ENCODE measurements at regions of chr10 and their contacts with region 1.

Region 1: DNA sequence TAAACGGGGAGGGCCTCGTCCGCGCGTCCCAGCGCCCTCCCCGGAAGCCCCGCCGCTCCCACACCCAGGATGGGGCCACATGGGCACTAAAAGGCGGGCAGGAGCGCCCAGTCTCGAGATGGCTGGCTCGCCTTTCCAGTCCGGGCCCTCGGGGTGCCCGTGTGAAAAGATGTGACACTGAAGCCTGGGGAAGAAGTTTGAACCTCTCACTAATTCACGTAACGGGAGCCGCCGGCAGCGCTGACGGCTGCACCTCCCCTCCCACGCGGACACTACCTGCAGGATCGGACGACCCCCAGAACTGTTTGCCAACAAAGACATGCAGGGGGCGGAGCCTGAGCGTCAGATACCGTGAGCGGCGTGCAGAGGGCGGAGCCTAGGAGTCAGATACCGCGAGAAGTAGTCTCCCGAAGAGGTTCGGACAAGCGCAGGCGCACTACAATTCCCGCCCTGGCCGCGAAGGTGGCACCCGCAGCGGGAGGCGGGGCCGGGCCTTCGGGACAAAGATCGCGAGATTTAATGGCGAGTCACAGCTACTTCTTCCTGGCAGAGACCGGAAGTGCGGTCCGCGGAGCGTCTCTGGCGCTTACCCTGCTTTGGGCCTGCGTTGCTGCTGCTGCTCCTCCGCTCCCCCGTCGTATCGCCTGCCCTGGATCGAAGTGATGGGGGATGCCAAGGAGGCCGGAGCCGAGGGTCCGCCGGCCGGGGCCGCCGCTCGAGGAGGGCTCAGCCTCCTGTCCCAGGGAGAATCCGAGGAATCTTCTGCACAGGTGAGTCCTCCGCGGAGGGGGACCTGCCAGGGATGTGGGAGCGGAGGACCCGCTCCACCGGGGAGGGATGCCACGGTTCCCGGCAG is at the start of gene EDRF1:
- DNase-seq: peak; percentile 99
- H3K4me3 Mint-ChIP-seq: peak within 1 kb of the TSS; percentile 97
- H3K27ac Mint-ChIP-seq: peak within 1 kb of the TSS; percentile 97
- H3K4me1 Mint-ChIP-seq: peaks cover 30% of the 10 kb centered on the region
- H3K27me3 Mint-ChIP-seq: no peaks in the 10 kb centered on the region
- total RNA-seq, gene EDRF1: 23.0 to 27.7 TPM

Region 2: DNA sequence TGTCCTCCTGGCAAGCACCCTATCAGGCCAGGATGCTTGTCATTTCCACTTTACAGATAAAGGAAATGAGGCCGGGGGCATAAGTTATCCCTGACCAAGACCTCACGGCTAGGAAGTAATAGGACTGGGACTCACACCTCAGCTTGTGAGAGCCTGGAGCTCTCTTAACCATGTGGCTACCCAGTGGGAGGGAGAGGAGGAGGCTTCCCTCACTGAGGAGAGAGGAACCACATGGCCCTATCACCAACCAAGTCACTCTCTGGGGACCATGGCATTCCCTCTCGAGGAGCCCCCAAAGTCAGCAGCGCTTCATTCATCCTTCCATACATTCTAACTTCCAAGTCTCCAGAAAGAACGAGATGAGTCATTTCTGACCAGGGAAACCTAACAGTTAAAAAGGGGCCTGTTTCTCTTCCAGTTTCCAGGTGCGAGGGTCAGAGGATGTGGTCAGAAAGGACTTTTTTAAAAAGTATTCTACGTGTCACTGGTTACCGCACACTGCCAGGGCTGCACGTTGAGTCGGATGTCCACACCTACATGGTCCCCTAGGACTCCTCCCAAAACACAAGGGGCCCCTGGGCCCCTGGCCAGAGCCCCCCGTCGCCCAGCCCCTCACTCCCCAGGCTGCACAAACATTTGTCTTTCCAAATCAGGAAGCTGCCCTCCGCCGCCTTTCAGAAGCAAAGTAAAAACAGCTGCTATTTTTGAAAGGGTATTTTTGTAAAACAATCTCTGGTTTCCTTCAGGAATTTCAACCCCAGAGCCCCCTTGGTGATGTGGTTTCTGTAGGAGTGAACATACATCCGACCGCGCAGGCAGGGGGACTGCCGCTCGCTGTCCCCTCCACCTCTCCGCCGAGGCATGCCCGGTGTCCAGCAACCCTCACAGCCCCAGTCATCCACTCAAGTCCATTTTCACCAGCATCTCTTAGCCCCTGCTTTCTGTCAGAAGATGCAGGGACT is 1497.7 kb before region 1 on chr10:
- CTCF ChIA-PET with region 1: no interaction called
- POLR2A ChIA-PET with region 1: no interaction called
- intact Hi-C with region 1: loop called (anchors 5 kb)
- DNase-seq: no peak
- H3K4me3 Mint-ChIP-seq: no peak overlapping the region
- H3K27ac Mint-ChIP-seq: no peak overlapping the region
- H3K4me1 Mint-ChIP-seq: no peaks in the 10 kb centered on the region
- H3K27me3 Mint-ChIP-seq: peaks cover 9% of the 10 kb centered on the region

Region 3: GRCh38 chr10:125822878-125823662 is 103.7 kb after region 1 on chr10 and contains the starts of genes BCCIP and UROS:
- CTCF ChIA-PET with region 1: no interaction called
- POLR2A ChIA-PET with region 1: interaction called, 6 read pairs
- intact Hi-C with region 1: loop called (anchors 1 kb)
- DNase-seq: peak; percentile 92
- H3K4me3 Mint-ChIP-seq: peak within 1 kb of the TSS; percentile 73
- H3K27ac Mint-ChIP-seq: no peak within 1 kb of the TSS
- H3K4me1 Mint-ChIP-seq: peaks cover 23% of the 10 kb centered on the region
- H3K27me3 Mint-ChIP-seq: no peaks in the 10 kb centered on the region
- total RNA-seq, gene BCCIP: 96.3 to 100 TPM
- total RNA-seq, gene UROS: 35.0 to 38.3 TPM

Region 4: GRCh38 chr10:125844751-125845221 is 125.4 kb after region 1 on chr10:
- CTCF ChIA-PET with region 1: no interaction called
- POLR2A ChIA-PET with region 1: no interaction called
- intact Hi-C with region 1: no loop called
- DNase-seq: no peak
- H3K4me3 Mint-ChIP-seq: no peak overlapping the region
- H3K27ac Mint-ChIP-seq: no peak overlapping the region
- H3K4me1 Mint-ChIP-seq: no peaks in the 10 kb centered on the region
- H3K27me3 Mint-ChIP-seq: no peaks in the 10 kb centered on the region

Measured in activated CD4-positive, alpha-beta memory T cell treated with anti-CD3 and anti-CD28 coated beads for 36 hours (primary cell).